ENCODE measurements at regions of chr1 and their contacts with region 1.

Region 1: GRCh38 chr1:171485375-171486047 is at the start of gene PRRC2C:
- DNase-seq: peak; percentile 97
- ATAC-seq: peak; percentile 97 to 98
- H3K4me3 ChIP-seq: peak within 1 kb of the TSS; percentile 70 to 100 (median 96)
- H3K27ac ChIP-seq: peak within 1 kb of the TSS; percentile 92 to 100 (median 98)
- H3K4me1 ChIP-seq: peaks cover 39 to 42% of the 10 kb centered on the region in 2 donors
- H3K27me3 ChIP-seq: no peaks in the 10 kb centered on the region
- CTCF ChIP-seq: peak in 4 of 5 experiments; percentile 69 to 83 (median 80)
- POLR2A ChIP-seq: peak; percentile 77 to 78
- total RNA-seq, gene PRRC2C: 40.9 to 45.7 (median 42.0) TPM

Region 2: DNA sequence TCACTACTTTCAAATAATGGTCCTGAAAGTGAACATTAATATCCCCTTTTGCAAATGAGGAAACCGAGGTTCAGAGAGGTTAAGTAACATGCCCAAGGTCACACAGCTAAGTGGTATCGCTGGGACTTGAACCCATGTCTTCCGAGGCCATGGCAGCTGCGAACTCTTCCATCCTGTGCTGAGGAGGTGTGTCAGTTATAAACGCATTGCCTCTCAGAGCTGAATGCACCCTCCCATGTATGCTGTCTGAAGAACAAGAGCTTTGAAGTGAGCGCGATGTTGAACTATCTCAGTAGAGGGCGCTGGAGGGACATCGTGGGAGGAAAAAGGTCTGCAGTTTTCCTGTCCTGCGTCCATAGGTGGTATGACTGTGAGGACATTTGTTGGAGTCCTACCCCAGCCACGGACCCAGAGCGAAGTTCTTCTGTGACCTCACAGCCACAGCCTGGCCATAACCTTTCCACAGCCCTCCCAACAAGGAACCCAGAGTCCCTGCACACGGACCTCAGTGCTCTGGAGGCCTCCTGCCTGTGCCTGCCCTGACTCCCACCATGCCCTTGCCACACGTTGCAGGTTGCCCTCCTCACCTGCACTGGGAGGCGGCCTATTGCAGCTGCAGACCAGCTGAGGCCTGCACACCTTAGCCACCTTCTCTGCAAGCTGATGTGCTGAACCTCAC is 159.4 kb after region 1 on chr1:
- in situ Hi-C with region 1: no loop called
- intact Hi-C with region 1: loop called (anchors 10 kb)
- DNase-seq: peak; percentile 42 to 83
- ATAC-seq: peak; percentile 84 to 89
- H3K4me3 ChIP-seq: peak overlapping the region; percentile 1 to 22 (median 16)
- H3K27ac ChIP-seq: peak overlapping the region; percentile 62 to 79 (median 76)
- H3K4me1 ChIP-seq: peaks cover 13 to 15% of the 10 kb centered on the region in 2 donors
- H3K27me3 ChIP-seq: no peaks in the 10 kb centered on the region
- CTCF ChIP-seq: peak; percentile 51 to 87 (median 77)
- POLR2A ChIP-seq: no peak

Region 3: GRCh38 chr1:171715813-171716251 is 230.3 kb after region 1 on chr1:
- in situ Hi-C with region 1: no loop called
- intact Hi-C with region 1: loop called (anchors 2 kb)
- DNase-seq: no peak
- ATAC-seq: no peak
- H3K4me3 ChIP-seq: no peak overlapping the region
- H3K27ac ChIP-seq: peak overlapping the region in 3 of 4 donors; percentile 64 to 69 (median 65)
- H3K4me1 ChIP-seq: peaks cover 19 to 25% of the 10 kb centered on the region in 2 donors
- H3K27me3 ChIP-seq: no peaks in the 10 kb centered on the region
- CTCF ChIP-seq: peak in 4 of 5 experiments; percentile 17 to 43 (median 35)
- POLR2A ChIP-seq: no peak

Region 4: GRCh38 chr1:171781176-171781875 is 295.8 kb after region 1 on chr1 and contains the start of gene METTL13:
- in situ Hi-C with region 1: no loop called
- intact Hi-C with region 1: loop called (anchors 1 kb)
- DNase-seq: peak; percentile 98
- ATAC-seq: peak; percentile 98 to 99
- H3K4me3 ChIP-seq: peak within 1 kb of the TSS; percentile 75 to 92 (median 87)
- H3K27ac ChIP-seq: peak within 1 kb of the TSS; percentile 88 to 95 (median 90)
- H3K4me1 ChIP-seq: peaks cover 34 to 35% of the 10 kb centered on the region in 2 donors
- H3K27me3 ChIP-seq: no peaks in the 10 kb centered on the region
- CTCF ChIP-seq: peak in 1 of 5 experiments; percentile 18
- POLR2A ChIP-seq: peak; percentile 82 to 90
- total RNA-seq, gene METTL13: 18.6 to 32.8 (median 23.5) TPM

Region 5: GRCh38 chr1:171841050-171841940 is 355.8 kb after region 1 on chr1 and contains the start of gene DNM3:
- in situ Hi-C with region 1: no loop called
- intact Hi-C with region 1: loop called (anchors 5 kb)
- DNase-seq: peak; percentile 48 to 64
- ATAC-seq: peak; percentile 91 to 92
- H3K4me3 ChIP-seq: peak within 1 kb of the TSS; percentile 66 to 86 (median 79)
- H3K27ac ChIP-seq: peak within 1 kb of the TSS; percentile 64 to 77 (median 72)
- H3K4me1 ChIP-seq: peaks cover 0 to 11% of the 10 kb centered on the region in 2 donors
- H3K27me3 ChIP-seq: no peaks in the 10 kb centered on the region
- CTCF ChIP-seq: no peak
- POLR2A ChIP-seq: peak; percentile 30 to 64
- total RNA-seq, gene DNM3: 0.35 to 1.6 (median 1.1) TPM

Region 6: DNA sequence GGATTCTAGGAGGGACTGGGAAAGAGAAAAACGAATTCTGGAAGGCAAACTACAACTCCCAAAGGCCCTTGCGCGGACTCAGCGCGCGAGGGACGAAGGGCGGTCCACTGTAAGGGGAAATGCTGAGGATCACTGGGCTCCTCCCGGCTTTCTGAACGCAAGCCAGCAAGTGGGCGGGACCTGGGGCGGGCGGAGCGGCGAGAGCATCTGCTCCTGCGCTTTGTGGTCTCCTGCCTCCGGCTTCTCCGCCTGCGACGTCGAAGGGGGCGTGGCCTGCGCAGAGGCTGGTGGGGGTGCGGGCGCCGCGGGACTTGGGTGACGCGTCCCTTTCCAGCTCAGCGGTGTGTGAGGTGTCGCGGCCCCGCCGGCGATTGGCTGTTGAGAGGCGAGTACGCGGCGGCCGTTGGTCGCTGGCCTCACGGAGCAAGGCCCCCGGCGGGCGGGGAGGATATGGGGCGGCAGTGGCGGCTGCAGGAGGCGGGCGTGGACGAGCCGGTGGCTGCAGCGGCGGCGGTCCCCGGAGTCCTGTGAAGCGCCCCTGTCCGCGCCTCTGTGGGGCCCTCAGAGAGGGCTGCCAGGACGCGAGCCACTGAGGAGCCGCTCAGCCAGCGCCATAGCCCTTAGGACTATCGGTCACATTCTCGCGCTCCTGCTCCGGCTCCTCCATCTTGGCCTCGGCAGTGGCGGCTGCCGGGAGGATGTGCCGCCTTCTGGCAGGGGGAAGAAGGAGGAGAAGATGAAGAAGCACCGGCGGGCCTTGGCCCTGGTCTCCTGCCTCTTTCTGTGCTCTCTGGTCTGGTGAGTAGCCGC is 1047.4 kb after region 1 on chr1 and contains the start of gene SUCO:
- in situ Hi-C with region 1: no loop called
- intact Hi-C with region 1: loop called (anchors 10 kb)
- DNase-seq: peak; percentile 99 to 100
- ATAC-seq: peak; percentile 90 to 93
- H3K4me3 ChIP-seq: peak within 1 kb of the TSS; percentile 69 to 99 (median 96)
- H3K27ac ChIP-seq: peak within 1 kb of the TSS; percentile 94 to 100 (median 98)
- H3K4me1 ChIP-seq: peaks cover 19 to 28% of the 10 kb centered on the region in 2 donors
- H3K27me3 ChIP-seq: no peaks in the 10 kb centered on the region
- CTCF ChIP-seq: no peak
- POLR2A ChIP-seq: peak; percentile 92 to 93
- total RNA-seq, gene SUCO: 5.8 to 11.3 (median 6.4) TPM

Measured in gastrocnemius medialis (tissue), 4 donors.